Caco-2 (cell line): ENCODE measurements at regions of chr21 and their contacts with region 1.

Region 1: GRCh38 chr21:36403713-36404112 is 18.5 kb downstream of the CHAF1B start:
- DNase-seq: no peak
- H3K4me3 ChIP-seq: no peak overlapping the region
- H3K4me3 Mint-ChIP-seq: no peak overlapping the region
- H3K27ac Mint-ChIP-seq: no peak overlapping the region
- H3K4me1 ChIP-seq: no peaks in the 10 kb centered on the region
- H3K4me1 Mint-ChIP-seq: no peaks in the 10 kb centered on the region
- H3K27me3 ChIP-seq: no peaks in the 10 kb centered on the region
- H3K27me3 Mint-ChIP-seq: no peaks in the 10 kb centered on the region
- CTCF ChIP-seq: no peak

Region 2: DNA sequence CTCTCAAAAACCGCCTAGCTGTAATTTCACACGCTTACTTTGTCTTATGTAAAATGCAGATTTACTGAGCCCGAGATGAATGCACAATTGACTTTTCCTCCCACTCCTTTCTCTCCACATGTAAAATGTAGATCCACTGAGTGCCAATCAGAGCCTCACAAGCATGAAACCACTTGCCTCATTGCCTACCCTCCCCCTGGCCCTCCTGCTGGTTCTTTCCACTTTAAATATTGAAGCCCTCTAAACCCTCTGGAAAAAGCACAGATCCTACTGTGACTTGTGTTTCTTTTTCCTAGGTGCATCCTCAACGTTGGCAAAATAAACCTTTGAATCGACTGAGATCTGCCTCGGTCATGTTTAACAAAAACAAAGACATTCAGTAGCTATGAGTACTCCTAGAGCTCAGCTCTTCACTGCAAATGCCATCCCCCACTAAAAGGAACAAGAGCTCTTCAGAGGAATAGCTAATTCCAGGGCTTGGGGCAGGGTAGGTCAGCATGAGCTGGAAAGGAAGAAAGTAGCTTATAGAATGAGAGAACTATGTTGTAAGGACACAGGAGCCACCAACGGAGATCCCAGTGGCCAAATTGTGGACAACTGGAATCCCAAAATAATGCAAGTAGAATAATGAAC is 989.1 kb before region 1 on chr21:
- CTCF ChIA-PET with region 1: no interaction called
- POLR2A ChIA-PET with region 1: no interaction called
- intact Hi-C with region 1: no loop called
- DNase-seq: no peak
- H3K4me3 ChIP-seq: no peak overlapping the region
- H3K4me3 Mint-ChIP-seq: no peak overlapping the region
- H3K27ac Mint-ChIP-seq: no peak overlapping the region
- H3K4me1 ChIP-seq: peaks cover 9% of the 10 kb centered on the region
- H3K4me1 Mint-ChIP-seq: peaks cover 7% of the 10 kb centered on the region
- H3K27me3 ChIP-seq: no peaks in the 10 kb centered on the region
- H3K27me3 Mint-ChIP-seq: no peaks in the 10 kb centered on the region
- CTCF ChIP-seq: no peak

Region 3: GRCh38 chr21:36385233-36386030 is 18.3 kb before region 1 on chr21 and contains the start of gene CHAF1B:
- CTCF ChIA-PET with region 1: interaction called, 11 read pairs
- POLR2A ChIA-PET with region 1: no interaction called
- intact Hi-C with region 1: no loop called
- DNase-seq: peak; percentile 82 to 90
- H3K4me3 ChIP-seq: peak within 1 kb of the TSS; percentile 52
- H3K4me3 Mint-ChIP-seq: peak within 1 kb of the TSS; percentile 74
- H3K27ac Mint-ChIP-seq: peak within 1 kb of the TSS; percentile 35
- H3K4me1 ChIP-seq: peaks cover 4% of the 10 kb centered on the region; the same call in 1 of the 2 replicates
- H3K4me1 Mint-ChIP-seq: peaks cover 4% of the 10 kb centered on the region
- H3K27me3 ChIP-seq: no peaks in the 10 kb centered on the region
- H3K27me3 Mint-ChIP-seq: no peaks in the 10 kb centered on the region
- CTCF ChIP-seq: no peak
- total RNA-seq, gene CHAF1B: 16.4 and 18.7 TPM in 2 replicates

Region 4: GRCh38 chr21:36567216-36567885 is 163.6 kb after region 1 on chr21:
- CTCF ChIA-PET with region 1: no interaction called
- POLR2A ChIA-PET with region 1: no interaction called
- intact Hi-C with region 1: no loop called
- DNase-seq: no peak
- H3K4me3 ChIP-seq: no peak overlapping the region
- H3K4me3 Mint-ChIP-seq: no peak overlapping the region
- H3K27ac Mint-ChIP-seq: no peak overlapping the region
- H3K4me1 ChIP-seq: no peaks in the 10 kb centered on the region
- H3K4me1 Mint-ChIP-seq: no peaks in the 10 kb centered on the region
- H3K27me3 ChIP-seq: no peaks in the 10 kb centered on the region; the same call in none of the 2 replicates
- H3K27me3 Mint-ChIP-seq: peaks cover 11% of the 10 kb centered on the region
- CTCF ChIP-seq: no peak